PC-3 (cell line): ENCODE measurements at regions of chr10 and their contacts with region 1.

Region 1: DNA sequence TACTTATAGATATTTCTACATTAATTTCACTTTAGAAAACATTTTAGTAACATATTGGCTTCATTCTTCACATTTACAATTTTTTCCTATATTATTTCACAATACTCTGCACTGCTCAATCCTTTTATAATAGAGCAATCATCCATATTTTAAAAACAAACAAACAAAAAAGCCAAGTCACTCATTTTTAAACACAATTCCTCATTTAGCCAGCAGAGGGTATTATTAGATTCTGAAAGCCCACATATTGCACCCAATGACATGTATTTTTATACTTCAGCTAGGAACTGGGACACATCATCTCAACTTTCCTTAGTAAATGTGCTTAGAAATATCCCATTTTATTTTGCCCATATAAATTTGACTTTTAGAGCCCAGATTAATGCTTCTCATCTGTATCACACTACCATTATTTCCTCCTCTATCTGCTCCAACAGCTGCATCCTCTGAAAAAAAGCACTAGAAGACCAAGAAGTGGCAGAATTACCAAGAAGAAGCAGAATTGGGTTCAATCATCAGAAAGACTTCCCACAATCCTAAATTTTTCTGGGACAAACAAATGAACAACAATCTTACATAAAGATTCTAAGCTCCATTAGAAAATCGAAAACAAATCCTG is 29.5 kb downstream of the CTNNA3 start:
- DNase-seq: peak; percentile 84
- ATAC-seq: peak; percentile 65
- H3K4me3 ChIP-seq: no peak overlapping the region
- H3K27ac ChIP-seq: no peak overlapping the region
- H3K4me1 ChIP-seq: peaks cover 15% of the 10 kb centered on the region
- H3K27me3 ChIP-seq: peaks cover 23% of the 10 kb centered on the region; the same call in 1 of the 2 replicates
- CTCF ChIP-seq: peak; percentile 92

Region 2: GRCh38 chr10:67587771-67588170 is 78.8 kb before region 1 on chr10:
- CTCF ChIA-PET with region 1: no interaction called
- POLR2A ChIA-PET with region 1: no interaction called
- intact Hi-C with region 1: no loop called
- DNase-seq: no peak
- ATAC-seq: no peak
- H3K4me3 ChIP-seq: no peak overlapping the region
- H3K27ac ChIP-seq: no peak overlapping the region
- H3K4me1 ChIP-seq: no peaks in the 10 kb centered on the region
- H3K27me3 ChIP-seq: no peaks in the 10 kb centered on the region
- CTCF ChIP-seq: no peak

Region 3: DNA sequence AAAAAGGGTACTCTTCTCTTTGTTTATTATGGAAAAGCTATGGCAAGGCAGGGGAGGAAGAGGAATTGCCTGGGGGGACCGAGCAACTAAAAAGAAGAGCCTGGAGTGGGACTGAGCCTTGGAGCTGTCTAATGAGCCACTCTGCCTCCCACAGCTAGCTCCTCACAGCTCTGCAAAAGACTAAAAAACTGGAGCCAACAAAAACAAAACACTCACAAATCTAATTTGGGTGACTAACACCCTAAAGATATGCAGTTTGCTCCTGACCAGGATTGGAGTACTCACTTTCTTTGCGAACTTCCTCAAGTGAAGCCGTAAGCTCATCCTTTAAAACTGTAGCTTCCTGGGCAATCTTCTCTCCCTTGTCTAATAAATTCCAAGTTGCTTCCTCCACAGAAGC is 60.0 kb before region 1 on chr10:
- CTCF ChIA-PET with region 1: no interaction called
- POLR2A ChIA-PET with region 1: no interaction called
- intact Hi-C with region 1: loop called (anchors 2 kb)
- DNase-seq: peak; percentile 91
- ATAC-seq: peak; percentile 62
- H3K4me3 ChIP-seq: no peak overlapping the region
- H3K27ac ChIP-seq: peak overlapping the region; percentile 25
- H3K4me1 ChIP-seq: peaks cover 47% of the 10 kb centered on the region
- H3K27me3 ChIP-seq: no peaks in the 10 kb centered on the region
- CTCF ChIP-seq: no peak

Region 4: GRCh38 chr10:67779465-67780203 is 113.1 kb after region 1 on chr10:
- CTCF ChIA-PET with region 1: interaction called, 10 read pairs
- POLR2A ChIA-PET with region 1: no interaction called
- intact Hi-C with region 1: loop called (anchors 1 kb)
- DNase-seq: peak; percentile 95
- ATAC-seq: peak; percentile 78
- H3K4me3 ChIP-seq: no peak overlapping the region
- H3K27ac ChIP-seq: no peak overlapping the region
- H3K4me1 ChIP-seq: peaks cover 11% of the 10 kb centered on the region
- H3K27me3 ChIP-seq: no peaks in the 10 kb centered on the region
- CTCF ChIP-seq: peak; percentile 95